Activated T-helper 1 cell treated with anti-CD3 and anti-CD28 coated beads, Interleukin-12 subunit alpha, Interleukin-12 subunit beta, Interleukin-2, Interleukin-4 antibody, amounts not matched to agents 30 ng/mL and 10 ng/mL and 1 ng/mL, durations not matched to agents 14 hours and 24 hours and 36 hours (primary cell): ENCODE measurements at regions of chr19 and their contacts with region 1.

Region 1: DNA sequence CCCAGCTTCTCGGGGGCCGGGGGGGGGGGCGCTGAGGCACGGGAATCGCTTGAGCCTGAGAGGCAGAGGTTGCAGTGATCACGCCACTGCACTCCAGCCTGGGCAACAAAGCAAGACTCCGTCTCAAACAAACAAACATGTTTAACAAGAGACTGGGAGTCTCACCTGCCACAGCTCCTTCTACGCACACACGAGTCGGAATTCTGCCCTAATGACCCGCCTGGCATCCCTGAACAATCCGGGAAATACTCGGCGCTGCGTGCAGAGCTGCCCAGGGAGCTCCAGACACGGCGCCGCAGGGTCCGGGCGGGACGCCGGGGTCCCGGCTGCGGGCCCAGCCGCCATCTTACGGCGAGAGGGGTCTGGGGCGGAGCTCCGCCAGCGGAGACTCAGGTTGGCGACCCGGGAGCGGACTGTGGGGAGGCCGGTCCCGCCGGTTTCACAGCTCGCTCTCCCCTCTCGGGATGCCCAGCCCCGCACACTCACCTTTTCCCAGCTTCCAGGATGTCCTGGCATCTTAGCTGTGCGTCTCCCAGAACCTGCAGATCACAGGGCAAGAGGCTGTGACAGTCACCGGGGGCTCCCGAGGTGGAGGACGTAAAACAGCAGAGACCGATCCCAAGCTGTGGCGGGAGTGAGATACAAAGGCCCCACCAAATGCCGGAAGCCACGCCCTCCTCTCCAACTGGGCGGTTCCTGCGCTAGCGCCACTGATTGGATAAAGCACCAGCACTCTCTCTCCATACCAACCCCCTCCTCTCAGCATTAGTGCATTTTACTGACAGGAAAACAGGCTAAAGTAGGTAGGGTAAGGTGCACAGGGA is 23.6 kb upstream of the ZNF724 start:
- DNase-seq: peak; percentile 86
- H3K4me3 Mint-ChIP-seq: peak overlapping the region; percentile 96
- H3K27ac Mint-ChIP-seq: peak overlapping the region; percentile 90
- H3K4me1 Mint-ChIP-seq: peaks cover 23% of the 10 kb centered on the region
- H3K27me3 Mint-ChIP-seq: no peaks in the 10 kb centered on the region

Region 2: GRCh38 chr19:23203841-23204344 is 69.9 kb before region 1 on chr19:
- intact Hi-C with region 1: no loop called
- DNase-seq: no peak
- H3K4me3 Mint-ChIP-seq: no peak overlapping the region
- H3K27ac Mint-ChIP-seq: no peak overlapping the region
- H3K4me1 Mint-ChIP-seq: no peaks in the 10 kb centered on the region
- H3K27me3 Mint-ChIP-seq: no peaks in the 10 kb centered on the region

Region 3: DNA sequence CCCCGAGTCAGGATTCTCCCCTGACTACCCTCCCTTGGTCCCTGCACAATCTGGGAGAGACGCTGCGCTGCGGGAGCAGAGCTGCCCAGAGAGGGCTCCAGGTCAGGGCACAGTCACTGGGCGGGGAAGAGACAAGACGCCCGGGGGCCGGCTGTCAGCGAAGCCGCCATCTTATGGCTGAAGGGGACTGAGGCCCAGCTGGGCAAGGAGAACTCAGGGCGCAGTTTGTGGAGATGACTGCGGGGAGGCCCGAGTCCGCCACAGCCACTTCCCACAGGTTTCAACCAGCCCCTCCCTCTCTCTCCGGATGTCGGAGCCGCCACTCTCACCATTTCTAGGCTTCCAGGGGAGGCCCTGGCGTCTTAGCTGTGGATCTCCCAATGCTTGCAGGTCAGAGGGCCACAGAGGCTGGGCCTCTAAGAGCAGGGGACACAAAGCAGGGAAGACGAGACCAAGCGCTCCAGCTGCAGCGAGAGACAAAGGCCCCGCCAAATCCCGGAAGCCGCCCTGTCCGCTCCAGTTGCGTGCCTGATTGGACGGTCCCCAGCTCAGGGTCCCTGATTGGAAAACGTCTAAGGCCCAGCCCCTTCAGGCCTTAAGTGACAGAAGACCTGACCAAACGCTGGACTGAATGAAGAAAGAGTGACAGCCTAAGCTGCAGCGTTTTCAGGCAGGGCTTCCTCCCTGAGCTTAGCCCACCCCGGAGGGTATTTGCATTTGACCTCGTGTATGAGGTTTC is 23.7 kb before region 1 on chr19 and contains the start of gene ZNF724:
- intact Hi-C with region 1: loop called (anchors 1 kb)
- DNase-seq: peak; percentile 87
- H3K4me3 Mint-ChIP-seq: peak within 1 kb of the TSS; percentile 93
- H3K27ac Mint-ChIP-seq: peak within 1 kb of the TSS; percentile 93
- H3K4me1 Mint-ChIP-seq: peaks cover 7% of the 10 kb centered on the region
- H3K27me3 Mint-ChIP-seq: no peaks in the 10 kb centered on the region
- total RNA-seq, gene ZNF724: 12.1 and 14.1 TPM in 2 replicates

Region 4: GRCh38 chr19:23286477-23286876 is 12.7 kb after region 1 on chr19:
- intact Hi-C with region 1: no loop called
- DNase-seq: no peak
- H3K4me3 Mint-ChIP-seq: no peak overlapping the region
- H3K27ac Mint-ChIP-seq: no peak overlapping the region
- H3K4me1 Mint-ChIP-seq: no peaks in the 10 kb centered on the region
- H3K27me3 Mint-ChIP-seq: no peaks in the 10 kb centered on the region

Region 5: DNA sequence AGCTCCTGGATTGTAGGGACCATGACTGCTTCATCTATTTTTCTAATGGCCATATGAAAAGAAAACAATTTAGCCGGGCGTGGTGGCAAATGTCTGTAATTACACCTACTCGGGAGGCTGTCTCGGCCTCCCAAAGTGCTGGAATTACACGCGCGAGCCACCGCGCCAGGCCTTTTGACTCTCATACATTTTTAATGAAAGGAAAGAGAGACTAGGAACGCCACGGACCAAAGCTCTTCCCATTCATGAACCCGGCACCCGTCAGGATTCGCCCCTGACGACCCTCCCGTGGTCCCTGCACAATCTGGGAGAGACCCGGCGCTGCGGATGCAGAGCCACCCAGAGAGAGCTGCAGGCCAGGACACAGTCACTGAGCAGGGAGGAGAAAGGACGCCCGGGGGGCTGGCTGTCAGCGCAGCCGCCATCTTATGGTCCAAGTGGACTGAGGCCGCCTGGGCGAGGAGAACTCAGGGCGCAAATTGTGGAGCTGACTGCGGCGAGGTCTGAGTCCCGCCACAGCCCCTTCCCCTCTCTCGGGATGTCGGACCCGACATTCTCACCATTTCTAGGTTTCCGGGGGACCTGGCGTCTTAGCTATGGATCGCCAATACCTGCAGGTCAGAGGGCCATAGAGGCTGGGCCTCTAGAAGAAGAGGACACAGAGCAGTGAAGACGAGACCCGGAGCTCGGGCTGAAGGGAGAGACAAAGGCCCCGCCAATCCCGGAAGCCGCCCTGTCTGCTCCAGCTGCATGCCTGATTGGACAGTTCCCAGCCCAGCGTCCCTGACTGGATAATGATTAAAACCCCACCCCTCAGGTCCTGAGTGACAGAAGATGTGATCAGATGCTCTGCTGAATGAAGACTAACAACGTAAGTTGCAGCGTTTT is 484.6 kb after region 1 on chr19 and contains the start of gene ZNF681:
- intact Hi-C with region 1: loop called (anchors 10 kb)
- DNase-seq: peak; percentile 76
- H3K4me3 Mint-ChIP-seq: peak within 1 kb of the TSS; percentile 90
- H3K27ac Mint-ChIP-seq: peak within 1 kb of the TSS; percentile 83
- H3K4me1 Mint-ChIP-seq: peaks cover 13% of the 10 kb centered on the region
- H3K27me3 Mint-ChIP-seq: no peaks in the 10 kb centered on the region
- total RNA-seq, gene ZNF681: 3.0 and 3.3 TPM in 2 replicates

Region 6: DNA sequence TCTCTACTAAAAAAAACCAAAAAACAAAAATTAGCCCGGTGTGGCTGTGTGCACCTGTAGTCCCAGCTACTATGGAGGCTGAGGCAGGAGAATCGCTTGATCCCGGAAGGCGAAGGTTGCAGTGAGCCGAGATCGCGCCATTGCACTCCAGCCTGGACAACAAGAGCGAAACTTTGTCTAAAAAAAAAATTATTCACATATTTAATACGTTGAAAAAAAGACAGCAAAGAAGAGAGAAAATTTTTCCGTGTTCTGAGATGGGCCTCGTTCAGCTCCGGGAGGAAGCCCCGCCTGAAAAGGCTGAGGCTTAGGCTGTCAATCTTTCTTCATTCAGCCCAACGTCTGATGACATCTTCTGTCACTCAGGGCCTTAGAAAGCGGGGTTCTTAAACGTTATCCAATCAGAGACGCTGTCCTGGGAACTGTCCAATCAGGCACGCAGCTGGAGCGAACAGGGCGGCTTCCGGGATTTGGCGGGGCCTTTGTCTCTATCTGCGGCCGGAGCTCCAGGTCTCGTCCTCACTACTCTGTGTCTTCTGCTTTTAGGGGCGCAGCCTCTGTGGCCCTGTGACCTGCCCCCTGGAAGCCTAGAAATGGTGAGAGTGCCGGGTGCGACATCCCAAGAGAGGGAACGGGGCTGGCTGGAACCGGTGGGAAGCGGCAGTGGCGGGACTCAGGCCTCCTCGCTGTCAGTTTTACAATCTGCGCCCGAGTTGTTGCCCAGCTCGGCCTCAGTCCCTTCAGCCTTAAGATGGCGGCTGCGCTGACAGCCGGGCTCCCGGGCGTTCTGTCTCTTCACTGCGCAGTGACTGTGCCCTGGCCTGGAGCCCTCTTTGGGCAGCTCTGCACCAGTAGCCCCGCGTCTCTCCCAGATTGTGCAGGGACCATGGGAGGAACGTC is 640.9 kb after region 1 on chr19 and contains the start of gene ZNF726:
- intact Hi-C with region 1: loop called (anchors 1 kb)
- DNase-seq: peak; percentile 82
- H3K4me3 Mint-ChIP-seq: peak within 1 kb of the TSS; percentile 95
- H3K27ac Mint-ChIP-seq: peak within 1 kb of the TSS; percentile 95
- H3K4me1 Mint-ChIP-seq: no peaks in the 10 kb centered on the region
- H3K27me3 Mint-ChIP-seq: no peaks in the 10 kb centered on the region
- total RNA-seq, gene ZNF726: 10.7 and 12.6 TPM in 2 replicates